Calu3 (cell line): ENCODE measurements at regions of chr1 and their contacts with region 1.

Region 1: GRCh38 chr1:29033829-29034466 is 89.8 kb downstream of the TMEM200B start:
- DNase-seq: no peak
- H3K4me3 Mint-ChIP-seq: no peak overlapping the region
- H3K27ac Mint-ChIP-seq: no peak overlapping the region
- H3K4me1 Mint-ChIP-seq: no peaks in the 10 kb centered on the region
- H3K27me3 Mint-ChIP-seq: no peaks in the 10 kb centered on the region
- CTCF ChIP-seq: peak; percentile 39

Region 2: GRCh38 chr1:28789412-28789811 is 244.5 kb before region 1 on chr1:
- CTCF ChIA-PET with region 1: interaction called, 6 read pairs
- intact Hi-C with region 1: loop called (anchors 5 kb)
- DNase-seq: no peak
- H3K4me3 Mint-ChIP-seq: no peak overlapping the region
- H3K27ac Mint-ChIP-seq: no peak overlapping the region
- H3K4me1 Mint-ChIP-seq: peaks cover 11% of the 10 kb centered on the region
- H3K27me3 Mint-ChIP-seq: peaks cover 59% of the 10 kb centered on the region
- CTCF ChIP-seq: no peak

Region 3: DNA sequence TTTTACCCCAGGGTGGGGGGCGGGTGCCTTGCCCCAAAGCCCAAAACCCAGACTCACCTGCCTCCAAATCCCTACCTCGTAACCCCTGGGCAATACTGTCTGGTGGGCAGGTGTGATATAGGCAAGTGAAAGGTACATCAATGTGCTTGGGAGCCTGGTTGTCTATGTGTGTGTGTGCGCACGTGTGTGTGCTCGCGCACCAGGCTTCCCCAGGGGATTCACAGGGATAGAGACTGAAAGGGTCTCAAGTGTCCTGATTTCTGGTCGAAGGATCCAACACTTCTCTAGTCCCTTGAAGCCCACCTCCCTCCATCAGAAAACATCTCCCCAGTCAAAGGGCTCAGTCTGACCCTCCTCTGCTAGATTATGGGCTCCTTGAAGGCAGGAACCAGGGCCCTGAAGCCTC is 148.5 kb before region 1 on chr1:
- CTCF ChIA-PET with region 1: interaction called, 65 read pairs
- intact Hi-C with region 1: loop called (anchors 1 kb)
- DNase-seq: no peak
- H3K4me3 Mint-ChIP-seq: no peak overlapping the region
- H3K27ac Mint-ChIP-seq: peak overlapping the region; percentile 78
- H3K4me1 Mint-ChIP-seq: peaks cover 37% of the 10 kb centered on the region
- H3K27me3 Mint-ChIP-seq: no peaks in the 10 kb centered on the region
- CTCF ChIP-seq: no peak

Region 4: GRCh38 chr1:29202584-29203340 is 168.8 kb after region 1 on chr1:
- CTCF ChIA-PET with region 1: interaction called, 6 read pairs
- intact Hi-C with region 1: loop called (anchors 5 kb)
- DNase-seq: peak; percentile 96
- H3K4me3 Mint-ChIP-seq: peak overlapping the region; percentile 19
- H3K27ac Mint-ChIP-seq: no peak overlapping the region
- H3K4me1 Mint-ChIP-seq: peaks cover 19% of the 10 kb centered on the region
- H3K27me3 Mint-ChIP-seq: no peaks in the 10 kb centered on the region
- CTCF ChIP-seq: peak; percentile 90